CD8-positive, alpha-beta memory T cell (primary cell): ENCODE measurements at regions of chr12 and their contacts with region 1.

Region 1: DNA sequence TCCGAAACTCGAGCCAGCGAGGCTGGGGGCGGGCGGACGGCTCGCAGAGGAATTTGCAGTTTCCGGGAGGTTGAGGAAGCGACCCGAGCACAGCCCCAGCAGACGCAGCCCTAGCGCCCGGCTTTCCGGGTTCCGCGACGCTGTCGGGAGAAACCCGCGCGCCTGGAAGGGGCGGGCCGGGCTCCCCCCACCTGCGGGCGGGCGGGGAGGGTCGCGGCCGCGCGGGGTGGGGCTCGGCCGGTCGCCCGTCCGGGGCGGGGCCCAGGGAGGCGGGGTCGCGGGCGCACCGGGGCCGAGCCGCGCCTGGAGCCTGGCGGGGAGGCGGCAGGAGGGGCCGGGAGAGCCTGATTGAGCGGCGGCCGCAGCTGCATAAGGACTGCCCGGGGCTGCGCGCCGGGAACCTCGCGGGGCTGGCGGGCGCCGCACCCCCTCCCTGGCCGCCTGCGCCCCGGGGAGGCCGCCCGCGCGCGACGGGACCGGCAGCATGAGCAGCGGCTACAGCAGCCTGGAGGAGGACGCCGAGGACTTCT is at the start of gene RASSF3:
- DNase-seq: peak; percentile 71 to 82 (median 77)
- H3K4me3 ChIP-seq: peak within 1 kb of the TSS; percentile 90
- H3K4me3 Mint-ChIP-seq: peak within 1 kb of the TSS; percentile 88 to 99 (median 98)
- H3K27ac ChIP-seq: peak within 1 kb of the TSS; percentile 82
- H3K27ac Mint-ChIP-seq: peak within 1 kb of the TSS; percentile 89 to 99 (median 95)
- H3K4me1 ChIP-seq: peaks cover 40% of the 10 kb centered on the region
- H3K4me1 Mint-ChIP-seq: peaks cover 29 to 53% (median 42%) of the 10 kb centered on the region in 3 donors
- H3K27me3 ChIP-seq: no peaks in the 10 kb centered on the region
- H3K27me3 Mint-ChIP-seq: no peaks in the 10 kb centered on the region
- total RNA-seq, gene RASSF3: 58.2 to 59.2 TPM

Region 2: DNA sequence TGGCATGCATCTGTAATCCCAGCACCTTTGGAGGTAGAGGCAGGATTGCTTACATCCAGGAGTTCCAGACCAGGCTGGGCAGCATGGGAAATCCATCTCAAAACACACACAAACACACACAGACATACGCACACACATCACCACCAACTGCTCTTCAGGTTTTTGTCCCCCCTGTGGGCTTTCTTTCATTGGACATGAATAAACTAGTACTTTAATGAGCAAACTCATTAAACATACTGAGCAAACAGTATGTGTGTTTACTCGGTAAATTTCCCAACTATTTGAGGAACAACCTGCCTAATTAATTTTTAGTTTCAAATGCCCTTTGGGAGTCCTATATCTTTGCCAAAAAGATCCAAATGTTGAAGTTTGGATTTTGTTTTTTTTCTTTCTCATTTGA is 10.0 kb before region 1 on chr12:
- CTCF ChIA-PET with region 1: interaction called, 16 read pairs
- POLR2A ChIA-PET with region 1: interaction called, 7 read pairs
- DNase-seq: no peak
- H3K4me3 ChIP-seq: no peak overlapping the region
- H3K4me3 Mint-ChIP-seq: peak overlapping the region in 1 of 7 donors; percentile 33
- H3K27ac ChIP-seq: no peak overlapping the region
- H3K27ac Mint-ChIP-seq: no peak overlapping the region
- H3K4me1 ChIP-seq: peaks cover 39% of the 10 kb centered on the region
- H3K4me1 Mint-ChIP-seq: peaks cover 22 to 34% (median 33%) of the 10 kb centered on the region in 3 donors
- H3K27me3 ChIP-seq: no peaks in the 10 kb centered on the region
- H3K27me3 Mint-ChIP-seq: peaks cover 0 to 6% of the 10 kb centered on the region in 2 donors

Region 3: GRCh38 chr12:64669270-64669842 is 59.1 kb after region 1 on chr12:
- CTCF ChIA-PET with region 1: interaction called, 25 read pairs
- POLR2A ChIA-PET with region 1: interaction called, 25 read pairs
- DNase-seq: peak; percentile 28 to 85 (median 70)
- H3K4me3 ChIP-seq: peak overlapping the region; percentile 66
- H3K4me3 Mint-ChIP-seq: peak overlapping the region; percentile 85 to 94 (median 92)
- H3K27ac ChIP-seq: peak overlapping the region; percentile 79
- H3K27ac Mint-ChIP-seq: peak overlapping the region; percentile 91 to 99 (median 96)
- H3K4me1 ChIP-seq: peaks cover 99% of the 10 kb centered on the region
- H3K4me1 Mint-ChIP-seq: peaks cover 93 to 96% (median 95%) of the 10 kb centered on the region in 3 donors
- H3K27me3 ChIP-seq: no peaks in the 10 kb centered on the region
- H3K27me3 Mint-ChIP-seq: no peaks in the 10 kb centered on the region

Region 4: DNA sequence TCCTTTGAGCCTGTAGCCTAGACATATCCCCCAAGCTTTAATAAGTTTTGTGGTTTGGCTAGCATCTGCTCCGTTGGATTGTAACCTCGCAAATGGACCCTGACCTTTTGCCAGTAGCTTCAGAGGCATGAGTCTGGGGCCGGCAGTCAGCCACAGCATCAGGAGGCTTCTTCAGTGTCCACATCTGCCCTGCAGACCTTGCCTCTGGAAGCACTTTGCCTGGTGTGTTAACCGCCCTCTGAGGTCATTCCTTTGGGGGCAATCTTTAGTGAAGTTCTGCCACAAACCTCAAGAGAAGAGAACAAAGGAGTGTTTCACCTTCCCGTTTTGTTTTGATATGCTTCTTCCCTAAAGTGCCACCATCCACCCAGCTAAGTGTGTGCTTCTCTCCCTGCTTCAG is 77.6 kb after region 1 on chr12:
- CTCF ChIA-PET with region 1: interaction called, 9 read pairs
- POLR2A ChIA-PET with region 1: interaction called, 10 read pairs
- DNase-seq: peak in 1 of 5 donors; percentile 73
- H3K4me3 ChIP-seq: peak overlapping the region; percentile 0
- H3K4me3 Mint-ChIP-seq: peak overlapping the region in 6 of 7 donors; percentile 24 to 75 (median 38)
- H3K27ac ChIP-seq: no peak overlapping the region
- H3K27ac Mint-ChIP-seq: peak overlapping the region; percentile 65 to 99 (median 86)
- H3K4me1 ChIP-seq: peaks cover 87% of the 10 kb centered on the region
- H3K4me1 Mint-ChIP-seq: peaks cover 70 to 85% (median 85%) of the 10 kb centered on the region in 3 donors
- H3K27me3 ChIP-seq: no peaks in the 10 kb centered on the region
- H3K27me3 Mint-ChIP-seq: no peaks in the 10 kb centered on the region